ENCODE measurements at regions of chr14 and their contacts with region 1.

Region 1: DNA sequence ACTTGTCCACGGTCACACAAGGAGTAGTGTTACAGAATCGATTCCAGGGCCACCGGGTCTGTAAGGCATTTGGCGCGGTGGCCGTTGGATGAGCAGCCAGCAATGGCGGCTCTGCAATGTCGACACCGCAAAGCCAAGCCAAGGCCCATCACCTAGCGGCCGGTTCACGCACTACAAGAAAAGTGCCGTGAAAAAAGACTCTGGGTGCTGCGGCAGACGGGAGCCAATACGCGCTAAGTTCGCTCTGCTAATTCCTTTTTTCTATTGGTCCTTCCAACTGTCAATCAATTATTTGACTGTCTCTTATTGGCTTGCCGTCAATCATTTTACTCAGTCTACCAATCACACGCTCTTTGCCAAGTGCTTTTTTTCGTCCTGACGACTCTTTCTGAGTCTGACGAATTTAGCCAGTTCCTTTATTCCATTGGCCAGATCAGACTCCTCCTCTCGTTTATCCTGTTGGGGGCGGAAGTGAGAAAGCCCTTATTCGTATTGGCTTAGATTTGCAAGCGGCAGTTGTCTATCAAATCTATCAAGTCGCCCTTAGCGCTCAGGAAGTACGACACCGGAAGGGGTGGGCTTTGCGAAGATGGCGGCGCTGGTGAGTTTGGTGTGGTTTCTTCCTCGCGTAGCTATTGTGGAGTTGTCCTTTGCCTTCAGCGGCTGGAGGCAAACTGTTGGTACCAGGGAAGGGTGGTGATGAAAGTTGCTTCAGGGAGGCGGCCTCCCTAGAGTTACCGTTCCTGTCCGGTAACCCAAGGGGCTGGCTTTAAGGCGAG is at the start of gene NGDN:
- DNase-seq: peak; percentile 95
- H3K4me3 Mint-ChIP-seq: no peak within 1 kb of the TSS
- H3K27ac Mint-ChIP-seq: no peak within 1 kb of the TSS
- H3K4me1 Mint-ChIP-seq: peaks cover 6% of the 10 kb centered on the region
- H3K27me3 Mint-ChIP-seq: no peaks in the 10 kb centered on the region
- total RNA-seq, gene NGDN: 42.1 to 44.1 TPM

Region 2: DNA sequence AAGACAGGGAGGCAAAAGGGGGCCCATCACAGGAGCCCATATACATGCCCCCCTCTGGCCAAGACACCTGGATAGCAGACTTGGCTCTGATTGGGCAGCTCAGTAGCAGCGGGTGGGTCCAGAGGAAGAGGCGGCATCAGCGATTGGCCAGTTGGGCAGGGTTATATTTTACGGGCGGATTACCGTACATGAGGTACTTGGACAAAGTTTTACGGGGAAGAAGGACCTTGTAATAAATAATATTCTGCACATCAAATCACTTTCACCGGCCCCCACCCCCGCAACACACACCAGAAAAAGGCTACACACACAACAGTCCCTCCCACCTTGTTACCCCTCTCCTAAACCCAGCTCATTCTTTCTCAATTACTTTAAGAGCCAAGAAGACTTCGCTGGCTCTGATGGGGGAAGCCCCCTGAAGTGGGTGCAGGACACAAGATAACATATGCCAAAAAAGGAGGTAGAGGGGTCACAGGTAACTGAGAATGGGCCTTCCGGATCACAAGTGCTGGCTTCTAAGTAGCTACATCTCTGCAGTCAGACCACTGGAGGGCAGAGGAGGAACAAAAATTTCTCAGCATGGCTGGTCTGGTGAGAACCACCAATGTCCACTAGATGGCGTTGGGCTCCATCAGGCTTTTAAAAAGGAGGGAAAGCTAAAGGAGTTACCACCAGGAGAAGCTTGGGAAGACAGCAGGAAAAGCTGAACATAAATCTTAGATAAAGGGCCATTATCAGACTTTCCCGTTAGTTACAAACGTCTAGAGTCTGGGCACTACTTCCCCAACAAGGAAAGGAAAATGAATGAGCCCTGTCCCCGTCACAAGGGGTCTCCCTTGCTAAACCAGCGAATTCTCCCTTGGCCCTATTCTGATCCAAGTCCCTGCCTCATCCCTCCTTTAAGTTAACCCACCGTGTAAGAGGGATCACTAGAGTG is 400.6 kb before region 1 on chr14:
- CTCF ChIA-PET with region 1: no interaction called
- POLR2A ChIA-PET with region 1: no interaction called
- intact Hi-C with region 1: no loop called
- DNase-seq: peak; percentile 82
- H3K4me3 Mint-ChIP-seq: no peak overlapping the region
- H3K27ac Mint-ChIP-seq: peak overlapping the region; percentile 66
- H3K4me1 Mint-ChIP-seq: peaks cover 42% of the 10 kb centered on the region
- H3K27me3 Mint-ChIP-seq: no peaks in the 10 kb centered on the region

Region 3: GRCh38 chr14:23286020-23286905 is 183.1 kb before region 1 on chr14 and contains the start of gene HOMEZ:
- CTCF ChIA-PET with region 1: no interaction called
- POLR2A ChIA-PET with region 1: no interaction called
- intact Hi-C with region 1: loop called (anchors 1 kb)
- DNase-seq: peak; percentile 99
- H3K4me3 Mint-ChIP-seq: peak within 1 kb of the TSS; percentile 89
- H3K27ac Mint-ChIP-seq: peak within 1 kb of the TSS; percentile 87
- H3K4me1 Mint-ChIP-seq: peaks cover 25% of the 10 kb centered on the region
- H3K27me3 Mint-ChIP-seq: no peaks in the 10 kb centered on the region
- total RNA-seq, gene HOMEZ: 12.3 to 13.0 TPM

Measured in activated CD4-positive, alpha-beta memory T cell treated with anti-CD3 and anti-CD28 coated beads for 36 hours (primary cell).